ENCODE measurements at regions of chr1 and their contacts with region 1.

Region 1: GRCh38 chr1:149962123-149962548 is 25.5 kb upstream of the MTMR11 start:
- DNase-seq: peak; percentile 68
- H3K4me3 ChIP-seq: no peak overlapping the region
- H3K27ac ChIP-seq: peak overlapping the region; percentile 35
- H3K4me1 ChIP-seq: peaks cover 3% of the 10 kb centered on the region
- H3K27me3 ChIP-seq: no peaks in the 10 kb centered on the region
- CTCF ChIP-seq: peak; percentile 73

Region 2: DNA sequence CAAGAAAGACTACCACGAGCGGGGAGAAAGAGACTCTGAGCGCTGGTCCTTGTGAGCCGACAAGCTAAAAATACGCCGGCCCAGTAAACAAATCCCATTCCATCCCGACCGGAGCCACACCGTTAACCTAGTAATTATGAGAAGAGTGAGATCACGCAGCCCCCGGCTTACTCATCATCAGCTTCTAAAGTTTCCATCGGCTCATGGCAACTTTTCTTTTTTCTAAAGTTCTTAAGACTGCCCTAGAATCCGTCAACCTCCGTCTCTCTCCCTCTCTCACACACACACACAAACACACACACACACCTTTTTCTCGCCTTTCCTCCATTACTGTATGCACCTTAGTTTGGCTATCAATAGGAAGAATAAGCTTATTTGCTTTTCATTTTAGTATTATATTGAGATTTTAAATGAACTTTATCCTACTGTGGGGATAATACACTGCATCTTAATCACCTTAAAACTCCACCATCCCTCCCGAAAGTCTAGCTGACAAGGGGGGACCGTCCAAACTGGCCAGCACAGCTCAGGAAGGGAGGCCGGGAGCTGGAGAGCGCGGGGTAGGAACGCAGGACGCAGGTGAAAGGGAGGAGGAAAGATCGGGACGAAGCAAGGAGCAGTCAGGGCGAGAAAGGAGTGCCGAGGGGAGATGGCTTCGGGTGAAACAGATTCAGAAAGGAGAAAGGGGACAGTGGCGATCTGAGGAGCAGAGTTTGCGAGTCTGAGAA is 47.7 kb after region 1 on chr1:
- intact Hi-C with region 1: loop called (anchors 5 kb)
- DNase-seq: peak; percentile 60
- H3K4me3 ChIP-seq: peak overlapping the region; percentile 73
- H3K27ac ChIP-seq: peak overlapping the region; percentile 87
- H3K4me1 ChIP-seq: no peaks in the 10 kb centered on the region
- H3K27me3 ChIP-seq: no peaks in the 10 kb centered on the region
- CTCF ChIP-seq: no peak

Region 3: DNA sequence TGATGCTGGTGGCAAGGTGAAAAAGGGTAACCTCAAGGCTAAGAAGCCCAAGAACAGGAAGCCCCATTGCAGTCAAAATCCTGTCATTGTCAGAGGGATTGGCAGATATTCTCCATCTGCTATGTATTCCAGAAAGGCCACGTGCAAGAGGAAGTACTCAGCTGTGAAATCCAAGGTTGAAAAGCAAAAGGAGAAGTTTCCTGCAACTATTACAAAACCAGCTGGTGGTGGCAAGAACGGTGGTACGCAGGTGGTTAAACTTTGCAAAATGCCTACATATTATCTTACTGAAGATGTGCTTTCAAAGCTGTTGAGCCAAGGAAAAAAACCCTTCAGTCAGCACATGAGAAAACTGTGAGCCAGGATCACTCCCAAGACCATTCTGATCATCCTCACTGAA is 91.8 kb after region 1 on chr1:
- intact Hi-C with region 1: loop called (anchors 2 kb)
- DNase-seq: no peak
- H3K4me3 ChIP-seq: no peak overlapping the region
- H3K27ac ChIP-seq: no peak overlapping the region
- H3K4me1 ChIP-seq: no peaks in the 10 kb centered on the region
- H3K27me3 ChIP-seq: no peaks in the 10 kb centered on the region
- CTCF ChIP-seq: no peak

Region 4: DNA sequence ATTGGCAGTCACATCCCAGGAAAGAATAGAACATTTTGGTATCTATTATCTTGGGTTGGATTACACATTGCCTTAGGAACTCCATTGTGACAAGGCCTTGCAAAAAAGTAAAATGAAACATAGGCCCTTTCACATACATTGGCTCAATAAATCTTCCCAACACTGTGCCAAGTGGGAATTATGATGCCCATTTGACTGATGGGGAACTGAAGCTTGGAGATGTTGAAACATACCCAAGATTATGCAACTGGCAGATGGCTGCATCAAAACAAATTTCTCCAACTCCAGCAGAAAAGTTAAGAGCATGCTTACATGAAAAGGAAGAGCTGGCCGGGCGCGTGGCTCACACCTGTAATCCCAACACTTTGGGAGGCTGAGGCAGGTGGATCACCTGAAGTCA is 214.5 kb after region 1 on chr1:
- intact Hi-C with region 1: loop called (anchors 10 kb)
- DNase-seq: no peak
- H3K4me3 ChIP-seq: no peak overlapping the region
- H3K27ac ChIP-seq: no peak overlapping the region
- H3K4me1 ChIP-seq: no peaks in the 10 kb centered on the region
- H3K27me3 ChIP-seq: no peaks in the 10 kb centered on the region
- CTCF ChIP-seq: no peak